ENCODE measurements at regions of chr1 and their contacts with region 1.

Region 1: GRCh38 chr1:7516341-7516740 is 254.8 kb upstream of the VAMP3 start:
- DNase-seq: no peak
- H3K4me3 ChIP-seq: no peak overlapping the region
- H3K27ac ChIP-seq: no peak overlapping the region
- H3K27me3 ChIP-seq: peaks cover 3% of the 10 kb centered on the region
- CTCF ChIP-seq: peak; percentile 18; the same call in 1 of the 2 replicates

Region 2: DNA sequence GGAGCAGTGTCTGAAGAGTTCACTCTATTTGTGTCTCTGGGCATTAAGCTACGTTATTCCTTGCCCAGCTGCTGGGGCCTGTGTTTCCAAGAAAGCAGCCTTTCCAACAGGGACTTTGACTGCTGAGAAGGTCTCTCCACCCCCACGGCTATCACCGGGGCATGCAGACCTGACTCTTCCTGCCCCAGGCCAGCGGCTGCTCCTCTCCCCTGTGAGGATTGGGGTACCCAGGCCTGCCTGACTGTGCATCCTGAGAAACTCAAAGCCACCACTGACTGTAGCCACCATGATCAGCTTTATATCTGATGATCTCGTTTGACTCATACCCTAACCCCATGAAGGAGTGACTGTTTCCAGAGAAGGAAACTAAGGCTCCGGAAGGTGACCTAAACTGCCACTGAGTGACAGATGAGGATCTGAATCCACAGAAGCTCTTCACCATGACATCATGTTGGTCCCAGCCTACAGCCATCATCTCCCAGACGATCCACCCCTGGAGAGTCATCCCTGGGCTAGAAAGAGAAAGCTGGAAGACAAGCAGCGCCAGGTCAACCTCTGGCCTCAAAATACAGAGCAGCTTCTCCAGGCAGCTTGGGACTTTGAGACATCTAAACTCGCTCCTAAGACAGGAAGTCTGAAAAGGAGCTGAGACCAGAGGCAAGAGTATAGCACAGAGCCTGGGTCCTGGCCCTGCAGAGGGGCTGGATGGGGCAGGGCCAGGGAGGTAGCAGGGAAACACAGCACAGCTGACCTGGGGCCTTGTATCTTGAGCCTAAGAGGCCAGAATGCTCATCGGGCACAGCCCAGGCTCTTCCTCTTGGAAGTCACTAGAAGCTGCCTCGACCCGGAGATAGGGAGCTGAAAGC is 10.8 kb after region 1 on chr1:
- CTCF ChIA-PET with region 1: interaction called, 10 read pairs
- POLR2A ChIA-PET with region 1: no interaction called
- DNase-seq: no peak
- H3K4me3 ChIP-seq: no peak overlapping the region
- H3K27ac ChIP-seq: no peak overlapping the region
- H3K27me3 ChIP-seq: no peaks in the 10 kb centered on the region
- CTCF ChIP-seq: no peak

Region 3: DNA sequence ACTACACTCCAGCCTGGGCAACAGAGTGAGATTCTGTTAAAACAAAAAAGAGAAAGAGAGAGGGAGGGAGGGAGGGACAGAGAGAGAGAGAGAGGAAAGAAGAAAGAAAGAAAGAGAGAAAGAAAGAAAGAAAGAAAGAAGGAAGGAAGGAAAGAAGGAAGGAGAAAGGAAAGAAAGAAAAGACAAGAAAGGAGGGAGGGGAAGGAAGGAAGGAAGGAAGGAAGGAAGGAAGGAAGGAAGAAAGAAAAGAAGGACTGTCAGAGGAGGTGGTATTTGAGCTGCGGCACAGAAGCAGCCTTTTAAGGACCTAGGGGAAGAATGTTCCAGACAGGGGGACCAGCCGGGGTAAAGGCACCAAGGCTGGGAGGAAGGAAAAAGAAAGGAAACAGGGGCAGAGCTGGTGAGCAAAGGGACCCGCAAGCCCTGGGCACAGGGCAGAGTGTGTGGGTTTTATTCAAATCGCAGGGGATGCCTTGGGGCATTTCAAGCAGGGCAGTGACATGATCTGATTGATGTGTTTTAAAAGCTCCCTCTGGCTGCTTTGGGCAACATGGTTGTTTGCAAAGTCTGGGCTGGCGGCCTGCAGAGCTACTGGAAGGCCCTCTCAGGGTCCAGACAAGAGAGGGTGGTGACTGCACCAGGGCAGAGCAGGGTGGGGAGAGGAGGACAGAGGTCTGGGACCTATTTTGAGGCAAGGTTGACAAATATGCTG is 77.8 kb after region 1 on chr1:
- CTCF ChIA-PET with region 1: no interaction called
- POLR2A ChIA-PET with region 1: no interaction called
- DNase-seq: no peak
- H3K4me3 ChIP-seq: no peak overlapping the region
- H3K27ac ChIP-seq: no peak overlapping the region
- H3K27me3 ChIP-seq: peaks cover 12% of the 10 kb centered on the region
- CTCF ChIP-seq: no peak